ENCODE measurements at regions of chr7 and their contacts with region 1.

Region 1: GRCh38 chr7:142459551-142459963 is 201.7 kb upstream of the PRSS58 start:
- DNase-seq: peak; percentile 59
- H3K4me3 ChIP-seq: no peak overlapping the region
- H3K27ac ChIP-seq: no peak overlapping the region
- H3K27me3 ChIP-seq: no peaks in the 10 kb centered on the region
- CTCF ChIP-seq: peak; percentile 74

Region 2: GRCh38 chr7:142438235-142438922 is 21.2 kb before region 1 on chr7:
- CTCF ChIA-PET with region 1: interaction called, 37 read pairs
- POLR2A ChIA-PET with region 1: interaction called, 3 read pairs
- DNase-seq: no peak
- H3K4me3 ChIP-seq: no peak overlapping the region
- H3K27ac ChIP-seq: no peak overlapping the region
- H3K27me3 ChIP-seq: no peaks in the 10 kb centered on the region
- CTCF ChIP-seq: peak; percentile 56

Region 3: GRCh38 chr7:142445019-142445686 is 14.4 kb before region 1 on chr7:
- CTCF ChIA-PET with region 1: interaction called, 37 read pairs
- POLR2A ChIA-PET with region 1: interaction called, 3 read pairs
- DNase-seq: no peak
- H3K4me3 ChIP-seq: no peak overlapping the region
- H3K27ac ChIP-seq: no peak overlapping the region
- H3K27me3 ChIP-seq: no peaks in the 10 kb centered on the region
- CTCF ChIP-seq: 0 out of 2 replicates have a peak, but pooled peaks have one; percentile 21

Region 4: GRCh38 chr7:142471820-142472219 is 12.3 kb after region 1 on chr7:
- CTCF ChIA-PET with region 1: interaction called, 19 read pairs
- POLR2A ChIA-PET with region 1: no interaction called
- DNase-seq: no peak
- H3K4me3 ChIP-seq: no peak overlapping the region
- H3K27ac ChIP-seq: no peak overlapping the region
- H3K27me3 ChIP-seq: no peaks in the 10 kb centered on the region
- CTCF ChIP-seq: no peak

Region 5: GRCh38 chr7:142496545-142497041 is 37.0 kb after region 1 on chr7:
- CTCF ChIA-PET with region 1: interaction called, 30 read pairs
- POLR2A ChIA-PET with region 1: no interaction called
- DNase-seq: no peak
- H3K4me3 ChIP-seq: no peak overlapping the region
- H3K27ac ChIP-seq: no peak overlapping the region
- H3K27me3 ChIP-seq: peaks cover 5% of the 10 kb centered on the region
- CTCF ChIP-seq: peak; percentile 70

Region 6: DNA sequence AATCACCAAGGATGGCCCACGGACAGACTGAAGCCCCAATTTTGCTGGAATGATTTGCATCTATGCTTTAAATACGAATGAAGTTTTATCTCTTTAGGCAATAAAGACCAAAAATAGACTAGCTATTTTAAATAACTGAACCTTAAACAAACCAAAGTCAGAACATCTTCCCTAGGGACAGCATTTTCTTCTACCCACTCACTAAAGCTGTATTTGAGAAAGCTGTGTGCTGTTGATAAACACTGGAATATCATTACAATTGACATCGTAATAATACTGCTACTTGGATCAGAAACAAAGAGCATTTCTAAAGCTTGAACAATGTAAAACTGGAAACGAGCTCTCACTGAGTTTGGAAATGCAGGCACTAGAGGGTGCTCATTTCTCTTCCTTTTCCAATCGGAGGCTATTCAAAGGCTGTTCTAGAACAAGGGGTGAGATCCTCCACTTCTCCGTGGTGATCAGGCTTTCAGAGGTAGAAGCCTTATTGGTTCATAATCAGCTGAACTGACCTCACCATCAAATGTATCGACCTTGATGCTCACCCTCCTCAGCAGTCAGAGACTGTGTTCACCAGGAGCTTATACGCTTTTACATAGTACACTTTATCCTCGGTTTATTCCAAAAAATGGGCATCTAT is 64.4 kb after region 1 on chr7:
- CTCF ChIA-PET with region 1: interaction called, 34 read pairs
- POLR2A ChIA-PET with region 1: no interaction called
- DNase-seq: no peak
- H3K4me3 ChIP-seq: no peak overlapping the region
- H3K27ac ChIP-seq: no peak overlapping the region
- H3K27me3 ChIP-seq: peaks cover 15% of the 10 kb centered on the region
- CTCF ChIP-seq: peak; percentile 32; the same call in 1 of the 2 replicates

Region 7: GRCh38 chr7:143040209-143040715 is 580.7 kb after region 1 on chr7:
- CTCF ChIA-PET with region 1: no interaction called
- POLR2A ChIA-PET with region 1: no interaction called
- DNase-seq: no peak
- H3K4me3 ChIP-seq: no peak overlapping the region
- H3K27ac ChIP-seq: no peak overlapping the region
- H3K27me3 ChIP-seq: no peaks in the 10 kb centered on the region
- CTCF ChIP-seq: no peak

Measured in AG04450 (cell line).